Activated CD4-positive, alpha-beta T cell treated with anti-CD3 and anti-CD28 coated beads for 36 hours (primary cell): ENCODE measurements at regions of chr9 and their contacts with region 1.

Region 1: DNA sequence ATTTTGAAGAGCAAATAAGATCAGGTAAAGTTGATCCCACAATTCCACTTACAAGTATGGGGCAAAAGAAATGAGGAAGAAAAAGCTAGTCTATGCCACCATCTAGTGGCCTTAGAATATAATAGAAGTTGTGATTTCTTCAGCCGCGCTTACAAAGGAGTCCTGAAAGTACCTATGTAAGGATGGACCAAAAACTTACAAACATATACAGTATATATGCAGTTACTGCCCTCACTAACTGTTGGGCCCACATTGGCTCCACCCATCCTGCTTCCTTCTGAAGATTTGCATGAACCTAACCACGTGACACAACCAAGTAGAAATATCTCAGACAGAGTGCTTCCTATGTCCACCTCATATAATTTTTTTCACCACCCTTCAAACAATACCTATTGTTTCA is 11.7 kb upstream of the OR13D1 start:
- DNase-seq: no peak
- ATAC-seq: peak; percentile 53
- H3K4me3 Mint-ChIP-seq: no peak overlapping the region
- H3K27ac Mint-ChIP-seq: no peak overlapping the region
- H3K4me1 Mint-ChIP-seq: no peaks in the 10 kb centered on the region
- H3K27me3 Mint-ChIP-seq: no peaks in the 10 kb centered on the region

Region 2: GRCh38 chr9:103397868-103398600 is 1284.6 kb before region 1 on chr9:
- CTCF ChIA-PET with region 1: no interaction called
- POLR2A ChIA-PET with region 1: no interaction called
- intact Hi-C with region 1: loop called (anchors 2 to 5 kb)
- DNase-seq: peak; percentile 48
- ATAC-seq: peak; percentile 69
- H3K4me3 Mint-ChIP-seq: no peak overlapping the region
- H3K27ac Mint-ChIP-seq: no peak overlapping the region
- H3K4me1 Mint-ChIP-seq: no peaks in the 10 kb centered on the region
- H3K27me3 Mint-ChIP-seq: no peaks in the 10 kb centered on the region